Activated CD8-positive, alpha-beta T cell treated with anti-CD3 and anti-CD28 coated beads, Interleukin-2, amount 10 ng/mL, durations not matched to agents 7 days and 5 days (primary cell): ENCODE measurements at regions of chr11 and their contacts with region 1.

Region 1: DNA sequence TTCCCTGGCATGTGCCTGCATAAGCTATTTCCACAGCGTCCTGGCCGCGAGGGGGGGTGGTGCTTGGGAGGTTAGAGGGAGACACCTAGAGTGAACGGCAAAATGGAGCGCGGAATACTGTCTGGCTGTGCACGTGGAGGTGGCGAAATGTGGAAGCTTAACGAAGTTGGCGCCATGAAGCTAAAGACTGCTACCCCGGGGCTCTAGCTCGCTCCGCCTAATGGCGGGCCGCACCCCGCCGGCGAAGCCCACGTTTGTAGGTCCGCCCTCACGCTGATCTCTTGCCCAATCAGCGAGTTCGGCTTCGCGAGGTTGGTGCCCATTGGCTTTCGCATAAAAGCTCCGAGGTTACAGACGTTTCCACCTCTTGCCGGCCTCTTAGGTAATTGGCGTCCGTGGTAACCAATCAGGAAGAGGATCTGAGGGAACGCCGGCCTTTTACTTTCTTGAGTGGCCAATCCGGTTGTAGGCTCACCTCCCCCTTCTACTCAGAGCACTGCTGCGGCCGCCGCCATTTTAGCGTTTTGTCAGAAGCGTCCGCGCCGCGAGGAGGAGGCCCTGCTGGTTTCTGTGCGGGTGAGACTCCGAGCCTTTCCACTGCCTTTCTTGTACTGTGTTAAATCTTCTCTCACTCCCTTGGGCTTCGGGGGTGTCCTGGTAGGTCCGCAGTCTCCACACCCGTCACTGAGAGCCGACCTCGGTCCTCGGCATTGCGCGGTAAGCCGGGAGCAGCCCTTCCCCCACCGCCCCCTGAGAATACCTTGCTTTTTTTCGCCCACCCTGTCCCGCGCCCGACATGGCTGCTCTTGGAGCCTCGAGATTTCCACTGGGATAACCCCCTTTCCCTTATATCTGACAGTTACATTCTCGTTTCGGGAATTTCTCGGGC is at the start of gene RBM4:
- DNase-seq: peak; percentile 99
- ATAC-seq: peak; percentile 95
- H3K4me3 Mint-ChIP-seq: peak within 1 kb of the TSS; percentile 98
- H3K27ac Mint-ChIP-seq: peak within 1 kb of the TSS; percentile 98
- H3K4me1 Mint-ChIP-seq: peaks cover 62% of the 10 kb centered on the region
- H3K27me3 Mint-ChIP-seq: no peaks in the 10 kb centered on the region
- total RNA-seq, gene RBM4: 118 to 121 TPM

Region 2: DNA sequence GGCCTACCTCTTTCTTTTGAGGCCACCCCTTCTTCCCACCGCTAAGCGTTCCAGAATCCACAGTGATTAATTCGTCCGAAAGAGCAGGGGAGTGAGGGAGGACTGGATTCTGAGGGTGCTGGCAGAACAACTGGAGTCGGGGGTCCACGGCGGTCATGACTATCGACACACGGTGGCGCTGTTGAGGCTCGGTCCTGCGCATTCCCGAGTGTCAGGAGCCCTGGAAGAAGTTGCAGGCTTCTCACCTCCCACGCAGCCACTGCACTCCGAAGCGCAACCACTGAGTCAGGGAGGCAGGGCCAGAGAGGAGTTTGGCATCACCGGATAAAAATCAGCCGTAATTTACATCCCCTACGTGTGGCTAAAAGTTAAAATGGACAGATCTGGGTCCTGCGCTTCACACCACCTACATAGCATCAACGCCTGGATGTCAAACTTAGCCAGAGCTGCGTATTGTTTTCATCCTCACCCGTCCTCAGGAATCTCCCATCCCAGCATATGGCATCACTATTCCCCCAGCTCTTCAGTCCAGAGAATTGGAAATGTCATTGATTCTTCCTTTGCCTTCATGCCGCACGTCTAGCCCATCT is 59.3 kb before region 1 on chr11:
- CTCF ChIA-PET with region 1: interaction called, 12 read pairs
- POLR2A ChIA-PET with region 1: interaction called, 3 read pairs
- DNase-seq: peak; percentile 75
- ATAC-seq: peak; percentile 90
- H3K4me3 Mint-ChIP-seq: no peak overlapping the region
- H3K27ac Mint-ChIP-seq: no peak overlapping the region
- H3K4me1 Mint-ChIP-seq: peaks cover 6% of the 10 kb centered on the region
- H3K27me3 Mint-ChIP-seq: peaks cover 12% of the 10 kb centered on the region

Region 3: DNA sequence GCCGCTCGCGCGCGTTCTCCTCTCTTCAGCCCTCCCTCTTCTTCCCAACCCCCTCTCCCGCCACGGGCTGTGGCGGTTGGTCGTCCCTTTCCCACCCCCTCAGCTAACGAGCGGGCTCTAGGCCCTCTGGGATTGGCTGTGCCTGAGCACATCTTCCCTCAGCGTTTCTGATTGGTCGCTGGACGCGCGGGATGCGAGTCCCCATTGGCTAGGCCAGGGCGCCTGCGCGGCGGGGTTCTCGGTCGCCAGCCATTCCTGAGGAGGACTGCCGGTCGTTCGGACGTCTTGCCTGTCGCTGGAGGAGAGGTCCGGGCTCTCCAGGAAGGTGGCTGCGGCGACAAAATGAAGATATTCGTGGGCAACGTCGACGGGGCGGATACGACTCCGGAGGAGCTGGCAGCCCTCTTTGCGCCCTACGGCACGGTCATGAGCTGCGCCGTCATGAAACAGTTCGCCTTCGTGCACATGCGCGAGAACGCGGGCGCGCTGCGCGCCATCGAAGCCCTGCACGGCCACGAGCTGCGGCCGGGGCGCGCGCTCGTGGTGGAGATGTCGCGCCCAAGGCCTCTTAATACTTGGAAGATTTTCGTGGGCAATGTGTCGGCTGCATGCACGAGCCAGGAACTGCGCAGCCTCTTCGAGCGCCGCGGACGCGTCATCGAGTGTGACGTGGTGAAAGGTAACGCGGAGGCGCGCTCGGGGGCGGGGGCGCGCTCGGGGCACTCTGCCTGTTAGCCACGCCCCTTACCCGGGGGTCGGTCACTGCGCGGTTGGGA is 21.9 kb before region 1 on chr11 and contains the start of gene RBM14:
- CTCF ChIA-PET with region 1: interaction called, 28 read pairs
- POLR2A ChIA-PET with region 1: interaction called, 78 read pairs
- DNase-seq: peak; percentile 99
- ATAC-seq: peak; percentile 92
- H3K4me3 Mint-ChIP-seq: peak within 1 kb of the TSS; percentile 98
- H3K27ac Mint-ChIP-seq: peak within 1 kb of the TSS; percentile 99
- H3K4me1 Mint-ChIP-seq: peaks cover 36% of the 10 kb centered on the region
- H3K27me3 Mint-ChIP-seq: no peaks in the 10 kb centered on the region
- total RNA-seq, gene RBM14: 168 to 182 TPM

Region 4: GRCh38 chr11:66625041-66625751 is 13.2 kb before region 1 on chr11:
- CTCF ChIA-PET with region 1: interaction called, 21 read pairs
- POLR2A ChIA-PET with region 1: interaction called, 33 read pairs
- DNase-seq: no peak
- ATAC-seq: no peak
- H3K4me3 Mint-ChIP-seq: no peak overlapping the region
- H3K27ac Mint-ChIP-seq: no peak overlapping the region
- H3K4me1 Mint-ChIP-seq: peaks cover 47% of the 10 kb centered on the region
- H3K27me3 Mint-ChIP-seq: no peaks in the 10 kb centered on the region

Region 5: DNA sequence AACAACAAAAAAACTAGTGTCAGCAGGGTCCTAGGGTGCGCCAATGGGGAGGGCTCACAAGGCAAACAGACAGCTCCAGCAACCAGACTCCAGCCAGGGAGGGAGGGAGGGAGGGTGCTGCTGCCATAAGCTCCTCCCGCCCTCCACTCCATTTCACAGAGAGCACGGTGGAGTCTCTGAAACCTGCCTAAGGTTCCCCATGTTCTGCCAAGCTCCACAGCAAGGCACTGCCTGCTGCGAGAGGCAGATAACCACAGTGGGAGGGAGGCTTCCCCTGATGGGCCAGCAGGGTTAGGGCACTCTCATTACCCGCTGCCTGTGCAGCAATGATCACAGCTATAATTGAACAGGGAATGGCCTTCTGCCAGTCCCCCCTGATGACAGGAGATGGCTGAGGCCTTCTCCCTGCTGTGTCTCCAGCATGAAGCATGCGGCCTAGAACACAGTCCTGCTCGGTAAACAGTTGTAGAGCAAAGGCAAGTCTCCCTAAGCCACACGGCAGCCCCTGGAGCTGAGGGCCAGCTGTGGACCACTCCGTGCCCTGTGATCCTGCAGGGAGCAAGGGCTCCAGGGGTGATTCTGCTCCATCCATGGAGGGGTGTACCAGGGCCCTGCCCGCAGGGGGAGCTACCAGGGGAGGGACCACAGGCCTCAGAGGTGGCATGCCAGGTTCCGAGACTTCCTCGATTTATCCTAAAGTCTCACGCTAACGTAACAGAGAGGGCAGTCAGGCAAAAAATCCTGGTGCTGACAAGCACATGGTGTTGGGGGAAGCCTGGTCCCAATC is 276.8 kb after region 1 on chr11:
- CTCF ChIA-PET with region 1: no interaction called
- POLR2A ChIA-PET with region 1: no interaction called
- DNase-seq: no peak
- ATAC-seq: no peak
- H3K4me3 Mint-ChIP-seq: no peak overlapping the region
- H3K27ac Mint-ChIP-seq: no peak overlapping the region
- H3K4me1 Mint-ChIP-seq: no peaks in the 10 kb centered on the region
- H3K27me3 Mint-ChIP-seq: no peaks in the 10 kb centered on the region

Region 6: DNA sequence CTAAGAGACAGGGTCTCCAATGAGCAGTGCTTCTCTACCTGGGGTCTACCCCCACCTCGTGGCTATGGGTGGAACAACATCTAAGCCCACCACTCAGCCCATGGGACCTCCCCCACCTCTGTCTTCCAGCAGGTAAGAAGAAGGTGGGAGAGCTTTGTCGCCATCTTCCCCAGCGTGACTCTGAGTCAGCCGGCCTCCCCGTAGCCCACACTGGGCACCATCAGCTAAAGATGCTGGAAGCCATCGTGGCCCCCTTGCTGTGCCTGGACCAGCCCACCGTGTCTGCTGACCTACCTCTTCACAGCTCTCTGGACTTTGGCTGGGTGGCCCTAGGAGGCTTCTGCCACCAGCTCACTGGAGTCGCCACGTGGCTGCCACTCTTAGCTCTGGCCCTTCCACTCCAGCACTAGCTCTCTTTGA is 337.6 kb after region 1 on chr11:
- CTCF ChIA-PET with region 1: no interaction called
- POLR2A ChIA-PET with region 1: no interaction called
- DNase-seq: no peak
- ATAC-seq: no peak
- H3K4me3 Mint-ChIP-seq: no peak overlapping the region
- H3K27ac Mint-ChIP-seq: no peak overlapping the region
- H3K4me1 Mint-ChIP-seq: no peaks in the 10 kb centered on the region
- H3K27me3 Mint-ChIP-seq: no peaks in the 10 kb centered on the region